Prostate gland (tissue), 2 donors: ENCODE measurements at regions of chr2 and their contacts with region 1.

Region 1: GRCh38 chr2:233251306-233252116 is at the start of gene ATG16L1:
- DNase-seq: peak; percentile 95
- H3K4me3 ChIP-seq: peak within 1 kb of the TSS; percentile 96 to 97
- H3K27ac ChIP-seq: peak within 1 kb of the TSS; percentile 88 to 90
- H3K4me1 ChIP-seq: peaks cover 8% of the 10 kb centered on the region
- H3K27me3 ChIP-seq: no peaks in the 10 kb centered on the region
- CTCF ChIP-seq: peak; percentile 90 to 100 (median 98)
- POLR2A ChIP-seq: peak; percentile 76
- total RNA-seq, gene ATG16L1: 58.3 to 67.7 TPM

Region 2: DNA sequence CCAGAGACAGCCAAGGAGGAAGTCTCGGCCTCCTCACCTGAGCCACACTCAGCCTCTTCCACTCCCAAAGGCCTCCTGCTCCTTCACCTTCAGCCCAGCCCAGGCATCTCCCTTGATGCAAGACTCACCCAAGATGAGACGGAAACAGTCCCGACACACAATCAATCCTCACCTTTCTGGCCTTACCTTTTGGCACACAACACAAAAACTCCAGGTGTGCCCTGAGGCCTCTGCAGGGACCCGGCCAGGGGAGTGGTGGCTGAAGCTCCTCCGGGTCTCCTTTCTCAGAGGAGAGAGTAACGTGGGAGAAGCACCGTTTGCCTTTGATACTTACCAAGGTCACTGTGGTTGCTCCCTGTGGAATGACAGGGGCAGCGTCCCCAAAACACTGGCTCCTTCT is 641.9 kb before region 1 on chr2:
- intact Hi-C with region 1: loop called (anchors 5 kb)
- DNase-seq: no peak
- H3K4me3 ChIP-seq: no peak overlapping the region
- H3K27ac ChIP-seq: no peak overlapping the region
- H3K4me1 ChIP-seq: no peaks in the 10 kb centered on the region
- H3K27me3 ChIP-seq: no peaks in the 10 kb centered on the region
- CTCF ChIP-seq: no peak
- POLR2A ChIP-seq: no peak

Region 3: DNA sequence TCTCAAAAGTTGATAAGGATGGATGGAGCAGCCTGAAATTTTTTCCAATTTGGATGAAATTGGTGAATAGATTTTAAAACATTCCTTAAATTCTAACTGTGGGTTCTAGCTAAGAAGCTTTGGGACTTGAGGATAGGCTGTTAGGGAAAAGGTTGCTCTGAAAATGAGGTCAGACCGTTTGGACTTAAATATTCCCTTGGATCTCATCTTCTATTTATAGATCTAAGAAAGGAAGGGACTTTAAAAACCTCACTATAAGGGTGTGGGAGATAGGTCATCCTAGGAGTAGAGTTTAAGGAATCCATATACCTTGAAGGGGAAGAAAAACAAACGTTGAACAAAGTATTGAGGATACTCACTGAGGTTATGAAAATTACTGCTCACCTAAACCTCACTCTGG is 398.8 kb before region 1 on chr2:
- intact Hi-C with region 1: loop called (anchors 2 kb)
- DNase-seq: no peak
- H3K4me3 ChIP-seq: no peak overlapping the region
- H3K27ac ChIP-seq: no peak overlapping the region
- H3K4me1 ChIP-seq: no peaks in the 10 kb centered on the region
- H3K27me3 ChIP-seq: no peaks in the 10 kb centered on the region
- CTCF ChIP-seq: no peak
- POLR2A ChIP-seq: no peak

Region 4: DNA sequence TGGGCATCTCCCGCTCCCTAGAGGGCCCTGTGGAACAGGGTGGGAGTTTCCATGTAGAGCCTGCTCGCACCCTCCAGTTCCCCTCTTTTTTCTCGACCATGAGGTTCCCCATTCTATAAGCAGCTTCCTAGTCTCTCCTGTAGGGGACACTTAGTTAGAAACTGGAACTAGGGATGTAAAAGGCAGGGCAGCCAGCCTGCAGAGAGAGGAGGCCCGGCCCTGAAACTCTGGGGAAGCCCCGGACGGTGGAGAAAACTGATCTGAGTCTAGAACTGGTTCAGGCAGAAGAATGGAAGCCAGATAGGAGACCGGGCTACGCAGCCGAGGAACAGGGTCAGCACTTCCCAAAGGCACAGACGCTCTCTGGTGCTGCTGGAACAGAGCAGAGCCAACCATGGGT is 51.6 kb before region 1 on chr2:
- intact Hi-C with region 1: no loop called
- DNase-seq: no peak
- H3K4me3 ChIP-seq: no peak overlapping the region
- H3K27ac ChIP-seq: no peak overlapping the region
- H3K4me1 ChIP-seq: no peaks in the 10 kb centered on the region
- H3K27me3 ChIP-seq: no peaks in the 10 kb centered on the region
- CTCF ChIP-seq: no peak
- POLR2A ChIP-seq: no peak

Region 5: DNA sequence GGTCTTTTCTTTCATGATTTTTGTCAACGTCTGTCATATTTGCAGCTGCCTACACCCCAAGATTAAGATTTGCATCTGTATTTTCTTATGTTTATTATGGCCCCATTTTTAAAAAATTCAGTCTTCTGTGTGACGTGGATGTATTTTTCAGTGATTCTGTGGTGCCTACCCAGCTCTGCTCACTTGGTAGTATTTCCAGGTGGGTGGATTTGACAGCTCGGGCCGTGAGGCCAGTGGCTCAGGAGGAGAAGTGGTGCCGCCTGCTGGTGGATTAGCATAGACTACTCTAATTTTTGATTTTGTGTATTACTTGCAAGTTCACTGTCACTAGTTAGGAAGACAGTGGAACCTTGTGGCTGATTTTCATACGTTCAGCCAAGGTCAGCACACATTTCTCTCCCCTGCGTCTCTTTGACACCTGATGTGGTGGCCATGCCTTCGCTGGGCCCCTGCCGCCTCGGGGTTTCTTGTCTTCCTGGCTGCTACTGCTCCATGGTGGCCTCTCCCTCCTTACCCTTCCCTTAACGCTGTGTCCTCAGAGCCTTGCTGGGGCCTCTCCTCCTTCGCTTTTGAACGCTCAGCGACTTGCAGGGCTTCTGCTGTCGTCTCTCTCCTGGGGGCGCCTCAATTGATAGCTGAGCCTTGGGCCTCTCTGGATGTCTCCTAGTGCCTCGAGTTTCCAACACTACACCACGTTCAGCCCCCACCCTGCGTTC is 192.1 kb after region 1 on chr2:
- intact Hi-C with region 1: loop called (anchors 5 kb)
- DNase-seq: peak; percentile 84
- H3K4me3 ChIP-seq: no peak overlapping the region
- H3K27ac ChIP-seq: peak overlapping the region; percentile 11 to 39
- H3K4me1 ChIP-seq: no peaks in the 10 kb centered on the region
- H3K27me3 ChIP-seq: no peaks in the 10 kb centered on the region
- CTCF ChIP-seq: peak; percentile 70 to 93 (median 89)
- POLR2A ChIP-seq: no peak